Ovary (tissue), 10 donors: ENCODE measurements at regions of chrX and their contacts with region 1.

Region 1: GRCh38 chrX:136446208-136446607 is 41.5 kb upstream of the BRS3 start:
- DNase-seq: no peak
- H3K4me3 ChIP-seq: no peak overlapping the region
- H3K27ac ChIP-seq: no peak overlapping the region
- H3K4me1 ChIP-seq: no peaks in the 10 kb centered on the region
- H3K27me3 ChIP-seq: no peaks in the 10 kb centered on the region
- CTCF ChIP-seq: no peak
- EP300 ChIP-seq: no peak
- POLR2A ChIP-seq: no peak

Region 2: DNA sequence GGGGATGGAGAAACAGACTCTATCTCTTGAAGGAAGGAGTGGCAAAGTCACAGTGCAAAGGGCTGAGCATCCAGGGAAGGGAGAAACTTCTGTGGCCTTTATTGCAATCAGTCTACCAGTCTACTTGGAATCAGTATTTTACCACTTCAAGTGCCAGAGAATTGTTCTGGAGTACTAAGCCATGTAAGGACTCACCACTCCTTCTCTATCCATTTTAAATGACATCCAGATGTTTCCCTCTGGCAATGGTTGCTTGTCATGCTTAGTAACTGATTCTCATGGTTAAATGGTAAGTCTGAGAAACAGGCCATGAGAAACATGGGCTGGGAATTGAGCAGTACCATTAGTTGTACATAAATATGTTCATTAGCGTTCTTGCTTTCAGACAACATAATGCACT is 1476.5 kb before region 1 on chrX:
- intact Hi-C with region 1: no loop called
- DNase-seq: no peak
- H3K4me3 ChIP-seq: no peak overlapping the region
- H3K27ac ChIP-seq: no peak overlapping the region
- H3K4me1 ChIP-seq: no peaks in the 10 kb centered on the region
- H3K27me3 ChIP-seq: no peaks in the 10 kb centered on the region
- CTCF ChIP-seq: no peak
- EP300 ChIP-seq: no peak
- POLR2A ChIP-seq: no peak

Region 3: GRCh38 chrX:136431625-136432024 is 14.6 kb before region 1 on chrX:
- intact Hi-C with region 1: no loop called
- DNase-seq: no peak
- H3K4me3 ChIP-seq: no peak overlapping the region
- H3K27ac ChIP-seq: no peak overlapping the region
- H3K4me1 ChIP-seq: no peaks in the 10 kb centered on the region
- H3K27me3 ChIP-seq: no peaks in the 10 kb centered on the region
- CTCF ChIP-seq: no peak
- EP300 ChIP-seq: no peak
- POLR2A ChIP-seq: no peak

Region 4: GRCh38 chrX:136488706-136489105 is 42.5 kb after region 1 on chrX:
- intact Hi-C with region 1: loop called in 1 of 4 experiments (anchors 1 kb)
- DNase-seq: no peak
- H3K4me3 ChIP-seq: no peak overlapping the region
- H3K27ac ChIP-seq: no peak overlapping the region
- H3K4me1 ChIP-seq: no peaks in the 10 kb centered on the region
- H3K27me3 ChIP-seq: no peaks in the 10 kb centered on the region
- CTCF ChIP-seq: peak in 1 of 3 donors; percentile 7
- EP300 ChIP-seq: no peak
- POLR2A ChIP-seq: no peak

Region 5: GRCh38 chrX:137550665-137551261 is 1104.6 kb after region 1 on chrX:
- intact Hi-C with region 1: no loop called
- DNase-seq: no peak
- H3K4me3 ChIP-seq: no peak overlapping the region
- H3K27ac ChIP-seq: no peak overlapping the region
- H3K4me1 ChIP-seq: no peaks in the 10 kb centered on the region
- H3K27me3 ChIP-seq: no peaks in the 10 kb centered on the region
- CTCF ChIP-seq: no peak
- EP300 ChIP-seq: no peak
- POLR2A ChIP-seq: no peak